T-cell (primary cell): ENCODE measurements at regions of chr1 and their contacts with region 1.

Region 1: GRCh38 chr1:105000793-105001192 is 1251.1 kb downstream of the AMY1C start:
- DNase-seq: no peak
- ATAC-seq: no peak
- H3K4me3 ChIP-seq: no peak overlapping the region
- H3K4me3 Mint-ChIP-seq: no peak overlapping the region
- H3K27ac ChIP-seq: no peak overlapping the region
- H3K27ac Mint-ChIP-seq: no peak overlapping the region
- H3K4me1 ChIP-seq: no peaks in the 10 kb centered on the region
- H3K4me1 Mint-ChIP-seq: no peaks in the 10 kb centered on the region
- H3K27me3 ChIP-seq: no peaks in the 10 kb centered on the region
- H3K27me3 Mint-ChIP-seq: no peaks in the 10 kb centered on the region

Region 2: DNA sequence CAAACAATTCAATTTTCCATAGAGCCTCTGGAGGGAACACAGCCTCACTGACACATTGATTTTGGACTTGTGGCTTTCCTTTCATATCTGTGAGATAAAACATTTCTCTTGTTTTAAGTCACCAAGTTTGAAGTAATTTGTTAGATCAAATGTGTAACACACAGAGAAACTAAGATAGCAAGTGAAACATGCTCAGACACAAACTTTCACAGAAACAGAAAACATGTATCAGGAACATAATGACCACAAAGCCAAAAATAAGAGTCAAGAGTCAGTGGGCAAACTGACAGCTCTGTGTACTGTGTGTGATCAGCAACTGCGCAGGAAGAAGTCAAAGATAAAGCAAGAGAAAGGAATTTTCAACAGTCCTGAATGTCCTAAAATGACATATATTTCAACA is 13.6 kb before region 1 on chr1:
- CTCF ChIA-PET with region 1: interaction called in 1 of 2 experiments, 10 read pairs
- POLR2A ChIA-PET with region 1: no interaction called
- DNase-seq: no peak
- ATAC-seq: no peak
- H3K4me3 ChIP-seq: no peak overlapping the region
- H3K4me3 Mint-ChIP-seq: no peak overlapping the region
- H3K27ac ChIP-seq: no peak overlapping the region
- H3K27ac Mint-ChIP-seq: no peak overlapping the region
- H3K4me1 ChIP-seq: no peaks in the 10 kb centered on the region
- H3K4me1 Mint-ChIP-seq: no peaks in the 10 kb centered on the region
- H3K27me3 ChIP-seq: no peaks in the 10 kb centered on the region
- H3K27me3 Mint-ChIP-seq: no peaks in the 10 kb centered on the region